GM18951 (cell line): ENCODE measurements at regions of chr4 and their contacts with region 1.

Region 1: GRCh38 chr4:94595879-94596483 is 144.2 kb downstream of the PDLIM5 start:
- POLR2A ChIP-seq: no peak

Region 2: DNA sequence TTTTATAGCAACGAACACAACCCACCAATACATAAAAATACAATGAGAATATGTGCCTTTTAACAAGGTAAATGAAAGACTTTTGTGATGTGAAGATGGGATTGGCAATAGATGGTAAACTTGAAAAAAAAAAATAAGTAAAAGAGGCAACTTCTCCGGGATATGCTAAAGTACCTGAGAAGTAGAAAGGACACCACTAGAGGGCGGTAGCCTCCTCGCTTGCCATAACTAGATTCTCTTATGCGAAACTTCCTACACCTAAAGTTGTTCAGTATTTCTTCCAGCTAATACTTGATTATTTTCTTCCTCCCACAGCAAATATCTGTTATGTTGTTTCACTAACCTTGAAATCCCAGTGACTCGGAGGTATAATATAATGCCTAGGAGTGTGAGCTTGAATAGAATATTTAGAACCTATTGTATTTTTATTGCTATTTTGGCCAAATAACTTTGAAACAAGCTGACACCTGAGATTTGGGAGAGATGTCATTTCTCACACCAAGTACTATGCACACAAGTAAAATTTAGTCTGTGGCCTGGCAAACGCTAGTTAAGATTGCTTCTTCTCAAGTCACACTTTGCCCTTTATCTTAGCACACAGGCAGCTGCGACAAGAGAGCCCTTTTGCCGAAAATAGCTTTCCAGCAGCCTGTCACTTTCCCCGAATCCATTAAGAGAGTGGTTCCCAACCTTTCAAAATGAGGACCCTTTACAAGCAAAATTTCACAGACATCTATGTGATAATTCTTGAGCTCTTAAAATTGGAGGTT is 189.1 kb before region 1 on chr4:
- in situ Hi-C with region 1: loop called (anchors 5 kb)
- POLR2A ChIP-seq: no peak